Activated naive CD4-positive, alpha-beta T cell treated with anti-CD3 and anti-CD28 coated beads for 36 hours (primary cell): ENCODE measurements at regions of chr4 and their contacts with region 1.

Region 1: DNA sequence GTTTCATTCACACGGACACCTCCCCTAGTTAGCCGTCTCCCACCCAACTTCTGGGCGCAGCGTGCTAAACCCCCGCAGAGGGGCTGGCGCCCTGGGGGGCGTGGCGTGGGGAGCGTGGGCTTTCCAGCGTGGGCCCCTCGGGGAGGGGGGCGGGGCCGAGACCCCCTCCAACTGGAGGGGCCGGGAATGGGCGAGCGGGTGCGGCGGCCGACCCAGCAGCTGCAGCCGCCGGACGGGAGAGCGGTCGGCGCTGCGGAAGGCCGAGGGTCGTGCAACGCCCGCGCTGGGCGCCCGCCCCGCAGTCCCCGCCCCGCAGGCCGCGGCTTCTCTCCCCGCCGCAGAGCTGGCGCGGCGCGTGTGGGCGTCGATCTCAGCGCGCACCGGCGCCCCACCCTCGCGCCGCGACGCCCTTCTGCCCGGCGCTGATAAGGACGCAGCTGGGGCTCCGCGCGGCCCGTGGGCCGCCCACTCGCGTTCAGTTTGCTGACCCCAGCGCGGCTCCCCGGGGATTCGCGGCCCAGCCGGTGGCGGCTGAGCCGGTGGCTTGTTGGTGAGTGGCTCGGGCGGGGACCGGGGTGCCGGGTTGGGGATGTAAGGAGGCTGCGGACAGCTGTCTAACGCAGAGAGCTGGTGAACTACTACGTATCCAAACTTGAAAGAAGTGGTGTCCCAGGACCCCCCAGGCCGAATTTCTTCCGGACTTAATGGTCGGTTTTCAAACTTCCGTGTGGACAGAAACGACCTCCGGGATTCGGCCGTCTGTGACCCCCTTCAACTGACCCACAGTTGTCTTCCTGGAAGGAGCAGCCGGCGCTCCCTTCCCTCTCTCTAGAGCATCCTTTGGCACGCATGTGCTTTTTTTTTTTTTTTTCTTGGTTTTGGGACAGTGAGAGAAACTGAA is 1.5 kb downstream of the FHDC1 start:
- DNase-seq: no peak
- H3K4me3 Mint-ChIP-seq: peak overlapping the region; percentile 67
- H3K27ac Mint-ChIP-seq: no peak overlapping the region
- H3K4me1 Mint-ChIP-seq: peaks cover 16% of the 10 kb centered on the region
- H3K27me3 Mint-ChIP-seq: peaks cover 44% of the 10 kb centered on the region

Region 2: DNA sequence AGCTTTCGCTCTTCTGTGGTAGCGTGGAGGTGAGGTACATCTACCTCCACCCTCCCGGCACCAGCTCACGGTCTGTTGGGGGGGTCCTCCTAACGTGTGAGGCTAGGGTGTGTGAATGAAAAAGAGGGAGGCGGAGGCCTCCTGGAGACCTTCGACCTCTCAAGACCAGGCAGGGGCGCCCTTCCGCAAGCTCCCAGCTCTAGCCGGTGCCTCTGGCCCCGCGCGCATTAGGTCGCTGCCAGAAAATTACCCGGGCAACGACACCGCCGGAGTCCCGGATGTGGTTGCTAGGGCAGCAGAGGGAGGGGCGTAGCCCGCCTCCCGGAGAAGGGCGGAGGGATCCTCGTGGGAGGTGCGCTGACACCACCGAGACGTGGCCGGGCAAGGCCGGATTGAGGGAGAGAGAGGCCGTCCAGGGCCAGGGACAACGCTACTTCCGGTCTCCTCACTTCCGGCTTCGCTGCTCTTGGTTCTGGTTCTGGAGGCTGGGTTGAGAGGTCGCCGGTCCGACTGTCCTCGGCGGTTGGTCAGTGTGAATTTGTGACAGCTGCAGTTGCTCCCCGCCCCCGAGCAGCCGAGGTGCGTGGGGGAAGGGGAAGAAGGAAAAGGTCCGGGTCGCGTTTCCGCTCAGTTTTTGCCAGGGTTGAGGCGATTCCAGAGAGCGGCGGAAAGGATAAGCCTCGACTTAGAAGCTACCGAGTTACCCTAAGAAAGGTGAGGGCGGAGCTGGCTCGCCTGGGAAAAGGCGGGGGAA is 157.9 kb before region 1 on chr4 and contains the starts of genes ARFIP1 and TIGD4:
- CTCF ChIA-PET with region 1: no interaction called
- intact Hi-C with region 1: loop called (anchors 1 kb)
- DNase-seq: peak; percentile 97
- H3K4me3 Mint-ChIP-seq: peak within 1 kb of the TSS; percentile 91
- H3K27ac Mint-ChIP-seq: peak within 1 kb of the TSS; percentile 75
- H3K4me1 Mint-ChIP-seq: peaks cover 23% of the 10 kb centered on the region
- H3K27me3 Mint-ChIP-seq: peaks cover 4% of the 10 kb centered on the region
- total RNA-seq, gene ARFIP1: 5.0 to 5.1 TPM
- total RNA-seq, gene TIGD4: 0.07 to 0.27 TPM

Region 3: DNA sequence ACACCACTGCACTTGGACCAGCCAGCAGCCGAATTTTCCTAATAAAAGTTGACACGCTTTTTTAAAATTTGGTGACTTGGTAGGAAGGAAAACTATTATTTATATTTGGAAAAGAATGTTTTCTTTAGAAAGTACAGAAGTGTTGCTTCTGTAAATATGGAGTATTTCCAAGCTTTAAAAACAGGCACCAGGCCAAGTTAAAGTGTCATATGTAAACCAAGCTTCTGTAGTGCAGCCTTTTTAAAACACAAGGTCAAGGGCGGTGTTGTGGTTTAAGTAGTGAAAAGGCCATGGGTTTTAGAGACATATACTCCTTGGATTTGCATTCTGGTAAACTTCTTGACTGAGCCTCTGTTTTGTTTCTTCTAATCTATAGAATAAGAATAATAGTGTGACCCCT is 329.4 kb after region 1 on chr4:
- CTCF ChIA-PET with region 1: no interaction called
- intact Hi-C with region 1: no loop called
- DNase-seq: no peak
- H3K4me3 Mint-ChIP-seq: no peak overlapping the region
- H3K27ac Mint-ChIP-seq: no peak overlapping the region
- H3K4me1 Mint-ChIP-seq: peaks cover 8% of the 10 kb centered on the region
- H3K27me3 Mint-ChIP-seq: no peaks in the 10 kb centered on the region